ENCODE measurements at regions of chr20 and their contacts with region 1.

Region 1: DNA sequence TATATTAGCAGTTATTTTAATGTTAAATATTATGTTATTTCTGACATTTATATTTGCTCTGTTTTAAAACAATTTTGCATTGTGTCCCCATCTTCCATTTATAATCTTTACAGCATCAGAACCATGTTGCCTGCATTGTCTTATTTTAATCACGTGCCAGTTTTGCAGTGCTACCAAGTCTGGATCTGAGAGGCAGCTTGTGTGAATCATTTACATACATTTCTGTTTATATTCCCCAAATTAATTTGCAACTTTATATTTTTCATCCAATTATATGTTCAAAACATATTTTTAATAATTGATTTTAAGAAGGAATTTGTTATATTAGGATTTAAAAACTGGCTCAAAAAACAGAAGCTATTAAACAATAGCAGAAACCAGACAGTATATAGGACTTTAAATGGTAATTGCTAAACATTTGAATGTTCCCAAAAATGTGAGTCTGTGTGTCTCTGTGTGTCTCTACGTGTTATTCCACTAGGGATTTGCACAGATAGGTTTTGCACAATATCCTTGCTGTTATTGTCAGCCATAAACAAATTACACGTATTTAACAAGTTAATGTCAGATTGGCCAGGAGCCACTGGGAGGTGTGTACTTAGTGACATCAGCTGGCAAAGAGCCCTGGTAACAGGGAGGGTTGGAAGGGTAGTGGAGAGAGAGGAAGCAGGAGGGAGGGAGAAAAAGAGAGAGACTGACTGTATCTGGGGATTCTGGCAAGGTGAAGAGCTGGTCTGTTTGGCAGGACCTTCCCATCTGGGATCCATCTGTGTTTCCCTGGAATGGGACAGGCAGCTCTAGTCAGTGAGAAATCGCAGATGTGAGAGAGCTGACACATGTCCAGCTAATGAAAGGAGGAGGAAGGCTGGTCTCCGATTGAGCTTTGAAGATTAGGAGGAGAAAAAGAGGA is 72.1 kb downstream of the CBFA2T2 start:
- DNase-seq: peak; percentile 96
- H3K4me3 ChIP-seq: peak overlapping the region in 3 of 4 donors; percentile 25 to 35 (median 25)
- H3K27ac ChIP-seq: peak overlapping the region; percentile 57 to 79 (median 74)
- H3K4me1 ChIP-seq: peaks cover 0 to 54% (median 45%) of the 10 kb centered on the region in 4 donors
- H3K27me3 ChIP-seq: no peaks in the 10 kb centered on the region
- CTCF ChIP-seq: no peak
- EP300 ChIP-seq: peak in 3 of 4 donors; percentile 51 to 81 (median 57)
- POLR2A ChIP-seq: no peak

Region 2: DNA sequence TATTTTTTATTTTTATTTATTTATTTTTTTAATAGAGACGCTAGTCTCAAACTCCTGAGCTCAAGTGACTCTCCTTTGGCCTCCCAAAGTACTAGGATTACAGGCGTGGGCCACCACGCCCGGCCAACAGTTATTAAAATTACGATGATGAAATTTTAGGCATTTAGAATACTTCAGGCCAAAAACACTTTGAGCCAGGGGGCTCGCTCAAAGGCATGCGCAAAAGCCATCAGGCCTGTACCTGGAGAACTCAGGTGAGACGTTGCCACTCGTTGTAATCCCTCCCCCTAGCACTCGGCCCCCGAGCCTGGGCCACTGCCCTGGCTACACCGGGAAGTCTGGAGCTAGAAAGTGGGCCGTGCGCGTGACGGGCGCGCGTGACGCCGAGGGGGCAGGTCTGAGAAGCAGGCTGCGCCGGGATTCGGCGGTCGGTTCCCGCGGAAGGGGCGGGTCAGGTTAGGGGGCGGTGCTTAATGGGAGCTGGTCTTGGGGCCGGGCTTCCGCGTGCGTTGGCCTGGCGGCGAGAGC is 72.4 kb before region 1 on chr20:
- intact Hi-C with region 1: loop called (anchors 5 kb)
- DNase-seq: peak; percentile 100
- H3K4me3 ChIP-seq: peak overlapping the region; percentile 28 to 98 (median 64)
- H3K27ac ChIP-seq: peak overlapping the region; percentile 84 to 95 (median 88)
- H3K4me1 ChIP-seq: peaks cover 0 to 29% (median 24%) of the 10 kb centered on the region in 4 donors
- H3K27me3 ChIP-seq: no peaks in the 10 kb centered on the region
- CTCF ChIP-seq: no peak
- EP300 ChIP-seq: peak in 1 of 4 donors; percentile 85
- POLR2A ChIP-seq: peak; percentile 98